CD8-positive, alpha-beta T cell (primary cell): ENCODE measurements at regions of chr21 and their contacts with region 1.

Region 1: GRCh38 chr21:32658524-32658923 is 46.3 kb upstream of the CFAP298 start:
- DNase-seq: no peak
- ATAC-seq: no peak
- H3K4me3 ChIP-seq: no peak overlapping the region
- H3K4me3 Mint-ChIP-seq: no peak overlapping the region
- H3K27ac ChIP-seq: no peak overlapping the region
- H3K27ac Mint-ChIP-seq: no peak overlapping the region
- H3K4me1 ChIP-seq: no peaks in the 10 kb centered on the region
- H3K4me1 Mint-ChIP-seq: no peaks in the 10 kb centered on the region
- H3K27me3 ChIP-seq: no peaks in the 10 kb centered on the region
- H3K27me3 Mint-ChIP-seq: no peaks in the 10 kb centered on the region
- CTCF ChIP-seq: no peak

Region 2: GRCh38 chr21:33449616-33450015 is 791.1 kb after region 1 on chr21:
- CTCF ChIA-PET with region 1: no interaction called
- POLR2A ChIA-PET with region 1: no interaction called
- intact Hi-C with region 1: loop called in 1 of 2 experiments (anchors 5 kb)
- DNase-seq: no peak
- ATAC-seq: no peak
- H3K4me3 ChIP-seq: no peak overlapping the region
- H3K4me3 Mint-ChIP-seq: no peak overlapping the region
- H3K27ac ChIP-seq: no peak overlapping the region
- H3K27ac Mint-ChIP-seq: no peak overlapping the region
- H3K4me1 ChIP-seq: no peaks in the 10 kb centered on the region
- H3K4me1 Mint-ChIP-seq: peaks cover 3% of the 10 kb centered on the region
- H3K27me3 ChIP-seq: no peaks in the 10 kb centered on the region
- H3K27me3 Mint-ChIP-seq: no peaks in the 10 kb centered on the region
- CTCF ChIP-seq: no peak